MCF 10A (cell line): ENCODE measurements at regions of chr5 and their contacts with region 1.

Region 1: DNA sequence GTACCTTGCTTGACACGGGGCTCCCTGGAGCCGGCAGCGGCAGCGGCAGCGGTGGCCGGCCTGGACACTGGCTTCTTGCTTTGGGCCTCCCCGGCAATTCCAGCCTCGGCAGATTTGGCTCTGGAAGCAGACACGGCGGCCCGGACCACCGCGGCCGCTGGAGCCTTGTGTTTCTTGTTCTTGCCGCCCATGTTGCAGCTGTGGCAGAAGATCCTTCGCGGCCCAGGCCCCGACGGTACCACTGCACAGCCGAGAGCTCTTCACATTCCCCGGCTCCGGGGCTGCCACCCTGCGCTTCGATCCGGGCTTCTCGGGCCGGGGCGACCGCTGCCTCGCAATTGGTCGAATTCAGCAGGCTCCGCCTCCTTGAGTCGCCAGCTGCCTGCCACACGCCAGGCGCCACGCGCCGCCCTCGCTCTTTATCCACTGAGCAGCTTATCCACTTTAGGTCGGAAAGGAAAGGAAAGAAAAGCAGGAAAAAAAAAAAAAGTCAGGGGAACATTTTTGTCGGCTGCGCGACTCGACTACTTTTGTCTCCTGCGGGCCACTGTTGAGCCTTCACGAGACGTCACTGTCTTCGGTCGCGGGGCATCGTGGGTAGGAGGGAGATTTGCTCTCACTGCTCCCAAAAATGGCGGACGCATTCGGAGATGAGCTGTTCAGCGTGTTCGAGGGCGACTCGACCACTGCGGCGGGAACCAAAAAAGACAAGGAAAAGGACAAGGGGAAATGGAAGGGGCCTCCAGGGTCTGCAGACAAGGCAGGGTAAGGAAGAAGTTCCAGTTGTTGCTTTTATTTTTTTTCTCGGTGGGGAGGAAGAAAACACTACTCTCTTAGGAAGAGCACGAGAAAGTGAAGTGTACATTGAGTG is at the starts of genes DHX29 and MTREX:
- DNase-seq: peak; percentile 93
- H3K4me3 Mint-ChIP-seq: no peak within 1 kb of the TSS
- H3K27ac Mint-ChIP-seq: no peak within 1 kb of the TSS
- H3K4me1 Mint-ChIP-seq: peaks cover 23% of the 10 kb centered on the region
- H3K27me3 Mint-ChIP-seq: no peaks in the 10 kb centered on the region
- CTCF ChIP-seq: no peak
- total RNA-seq, gene DHX29: 18.1 and 21.8 TPM in 2 replicates
- total RNA-seq, gene MTREX: 113 and 118 TPM in 2 replicates

Region 2: DNA sequence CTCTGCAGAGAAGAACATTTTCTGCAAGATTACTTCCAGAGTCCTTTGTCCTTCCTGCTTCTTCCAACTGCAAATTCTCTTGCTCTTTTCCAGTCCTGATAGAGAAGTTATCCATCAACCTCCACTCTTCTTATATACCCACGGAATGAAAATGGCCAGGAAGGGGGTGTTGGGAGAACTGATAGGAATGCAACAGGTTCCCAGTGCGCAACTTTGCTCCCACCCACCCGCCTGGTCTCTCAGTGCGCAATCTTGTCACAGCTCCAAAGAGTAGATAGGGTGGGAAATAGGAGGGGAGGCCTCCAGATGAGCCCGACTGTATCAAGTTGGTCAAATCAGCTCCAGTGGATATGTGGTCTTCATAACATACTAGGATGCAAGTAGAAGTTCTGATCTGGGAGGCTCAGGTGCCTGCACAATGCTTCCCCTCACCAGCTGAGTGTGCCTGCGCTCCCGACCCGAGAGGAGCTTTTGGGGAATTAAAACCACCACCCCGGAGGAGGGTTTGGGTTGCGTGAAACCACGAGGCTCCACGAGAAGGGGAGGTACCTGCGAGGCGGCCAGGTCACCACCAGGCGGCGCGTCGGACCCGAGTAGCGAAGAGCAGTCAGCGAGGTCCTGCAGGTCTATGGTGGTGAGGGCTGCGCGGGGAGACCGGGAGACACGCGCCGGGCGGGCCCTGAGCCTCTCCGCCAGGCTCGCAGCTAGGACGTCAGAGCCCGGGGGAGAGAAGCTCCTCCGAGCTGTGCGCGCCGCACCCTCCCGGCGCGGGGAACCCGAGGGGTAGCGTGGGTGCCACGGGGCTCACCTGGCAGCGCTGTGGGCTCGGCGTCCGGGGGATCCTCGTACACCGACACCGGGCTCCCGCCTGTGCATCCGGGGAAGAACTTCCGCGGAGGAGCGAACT is 81.3 kb before region 1 on chr5:
- CTCF ChIA-PET with region 1: interaction called, 20 read pairs
- POLR2A ChIA-PET with region 1: interaction called, 113 read pairs
- intact Hi-C with region 1: no loop called
- DNase-seq: peak; percentile 84
- H3K4me3 Mint-ChIP-seq: peak overlapping the region; percentile 74
- H3K27ac Mint-ChIP-seq: no peak overlapping the region
- H3K4me1 Mint-ChIP-seq: no peaks in the 10 kb centered on the region
- H3K27me3 Mint-ChIP-seq: no peaks in the 10 kb centered on the region
- CTCF ChIP-seq: peak; percentile 88

Region 3: GRCh38 chr5:55324815-55325418 is 17.3 kb after region 1 on chr5:
- CTCF ChIA-PET with region 1: interaction called, 4 read pairs
- POLR2A ChIA-PET with region 1: interaction called, 10 read pairs
- intact Hi-C with region 1: no loop called
- DNase-seq: peak; percentile 53
- H3K4me3 Mint-ChIP-seq: no peak overlapping the region
- H3K27ac Mint-ChIP-seq: no peak overlapping the region
- H3K4me1 Mint-ChIP-seq: no peaks in the 10 kb centered on the region
- H3K27me3 Mint-ChIP-seq: no peaks in the 10 kb centered on the region
- CTCF ChIP-seq: peak; percentile 67

Region 4: GRCh38 chr5:55497712-55498111 is 190.1 kb after region 1 on chr5:
- CTCF ChIA-PET with region 1: no interaction called
- POLR2A ChIA-PET with region 1: no interaction called
- intact Hi-C with region 1: no loop called
- DNase-seq: no peak
- H3K4me3 Mint-ChIP-seq: no peak overlapping the region
- H3K27ac Mint-ChIP-seq: no peak overlapping the region
- H3K4me1 Mint-ChIP-seq: no peaks in the 10 kb centered on the region
- H3K27me3 Mint-ChIP-seq: no peaks in the 10 kb centered on the region
- CTCF ChIP-seq: no peak